Aorta (tissue), 5 donors: ENCODE measurements at regions of chr22 and their contacts with region 1.

Region 1: GRCh38 chr22:30947816-30948454 is 20.6 kb downstream of the MORC2 start:
- DNase-seq: no peak
- ATAC-seq: peak; percentile 83
- H3K4me3 ChIP-seq: no peak overlapping the region
- H3K27ac ChIP-seq: peak overlapping the region; percentile 72 to 74
- H3K4me1 ChIP-seq: peaks cover 5 to 8% of the 10 kb centered on the region in 2 donors
- H3K27me3 ChIP-seq: no peaks in the 10 kb centered on the region

Region 2: DNA sequence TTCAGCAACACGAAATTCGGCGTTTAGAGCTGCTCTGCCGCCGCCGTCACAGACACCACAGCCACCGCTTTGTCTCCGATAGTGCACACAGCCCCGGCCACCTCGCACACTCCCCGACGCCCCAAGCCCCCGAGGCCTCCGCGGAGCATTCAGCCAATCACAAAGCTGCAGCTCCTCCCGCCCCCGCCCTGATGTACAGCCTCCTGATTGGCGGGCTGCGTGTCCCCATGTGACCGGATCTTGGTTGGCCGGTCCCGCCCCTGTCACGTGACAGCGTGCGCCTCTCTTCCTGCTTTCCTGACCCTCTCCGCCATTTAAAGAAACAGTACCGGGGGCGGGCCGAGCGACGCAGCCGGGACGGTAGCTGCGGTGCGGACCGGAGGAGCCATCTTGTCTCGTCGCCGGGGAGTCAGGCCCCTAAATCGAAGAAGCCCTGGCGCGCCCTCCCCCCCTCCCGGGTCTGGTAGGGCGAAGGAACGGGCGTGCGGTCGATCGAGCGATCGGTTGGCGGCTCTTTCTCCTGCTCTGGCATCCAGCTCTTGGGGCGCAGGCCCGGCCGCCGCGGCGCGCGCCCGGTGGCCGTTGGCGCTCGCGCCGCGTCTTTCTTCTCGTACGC is 21.1 kb after region 1 on chr22 and contains the start of gene TUG1:
- intact Hi-C with region 1: loop called in 1 of 2 experiments (anchors 1 kb)
- DNase-seq: peak; percentile 99
- ATAC-seq: peak; percentile 99
- H3K4me3 ChIP-seq: peak within 1 kb of the TSS; percentile 70 to 83
- H3K27ac ChIP-seq: peak within 1 kb of the TSS; percentile 55 to 64
- H3K4me1 ChIP-seq: peaks cover 0 to 4% of the 10 kb centered on the region in 2 donors
- H3K27me3 ChIP-seq: no peaks in the 10 kb centered on the region
- total RNA-seq, gene TUG1: 86.1 to 89.4 TPM

Region 3: GRCh38 chr22:30985561-30986208 is 37.8 kb after region 1 on chr22:
- intact Hi-C with region 1: loop called in 1 of 2 experiments (anchors 5 kb)
- DNase-seq: no peak
- ATAC-seq: no peak
- H3K4me3 ChIP-seq: no peak overlapping the region
- H3K27ac ChIP-seq: no peak overlapping the region
- H3K4me1 ChIP-seq: peaks cover 4 to 5% of the 10 kb centered on the region in 2 donors
- H3K27me3 ChIP-seq: no peaks in the 10 kb centered on the region

Region 4: DNA sequence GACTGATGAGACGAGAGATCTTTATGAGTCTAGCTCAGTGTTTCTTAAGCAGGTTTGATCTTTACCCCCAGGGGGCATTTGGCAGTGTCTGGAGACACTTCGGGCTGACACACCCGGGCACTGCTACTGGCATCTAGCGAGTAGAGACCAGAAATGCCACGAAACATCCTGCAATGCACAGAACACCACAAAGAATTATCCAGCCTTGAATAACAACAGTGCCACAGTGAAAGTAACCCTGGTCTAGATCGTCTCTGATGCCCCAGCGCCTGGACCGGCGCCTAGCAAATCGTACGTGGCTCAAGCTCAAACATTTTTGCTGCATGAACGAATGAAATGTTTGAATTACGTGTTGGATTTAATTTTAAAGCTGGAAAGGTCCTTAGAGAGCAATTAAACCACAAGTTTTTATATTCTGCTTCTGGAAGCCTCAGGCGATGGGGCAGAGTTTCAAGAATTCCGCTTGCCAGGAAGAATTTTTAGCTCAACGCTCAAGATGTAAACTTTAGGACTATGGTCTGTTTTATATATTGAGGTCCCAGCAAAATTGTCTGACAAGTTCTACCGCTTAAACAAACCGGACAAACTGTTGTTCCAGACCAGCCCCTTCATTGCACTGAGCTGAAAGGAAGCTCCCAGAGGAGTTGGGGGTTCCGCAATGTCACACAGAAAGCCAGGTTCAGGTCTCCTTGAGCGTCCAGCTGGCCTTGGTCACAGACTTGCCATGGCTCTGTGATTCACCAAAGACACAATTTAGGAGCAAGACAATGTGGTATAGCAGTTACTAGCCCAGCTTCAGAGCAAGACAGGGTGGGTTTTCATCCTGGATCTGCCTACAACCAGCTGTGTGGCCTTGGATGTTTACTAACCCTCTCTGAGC is 89.0 kb after region 1 on chr22:
- intact Hi-C with region 1: loop called (anchors 5 kb)
- DNase-seq: peak; percentile 74 to 85
- ATAC-seq: peak; percentile 76
- H3K4me3 ChIP-seq: peak overlapping the region in 1 of 2 donors; percentile 9
- H3K27ac ChIP-seq: peak overlapping the region; percentile 31 to 89
- H3K4me1 ChIP-seq: peaks cover 0 to 3% of the 10 kb centered on the region in 2 donors
- H3K27me3 ChIP-seq: no peaks in the 10 kb centered on the region

Region 5: GRCh38 chr22:31044262-31044861 is 96.4 kb after region 1 on chr22:
- intact Hi-C with region 1: loop called (anchors 5 kb)
- DNase-seq: peak; percentile 86 to 93
- ATAC-seq: peak; percentile 83
- H3K4me3 ChIP-seq: no peak overlapping the region
- H3K27ac ChIP-seq: peak overlapping the region; percentile 6 to 66
- H3K4me1 ChIP-seq: no peaks in the 10 kb centered on the region
- H3K27me3 ChIP-seq: no peaks in the 10 kb centered on the region

Region 6: DNA sequence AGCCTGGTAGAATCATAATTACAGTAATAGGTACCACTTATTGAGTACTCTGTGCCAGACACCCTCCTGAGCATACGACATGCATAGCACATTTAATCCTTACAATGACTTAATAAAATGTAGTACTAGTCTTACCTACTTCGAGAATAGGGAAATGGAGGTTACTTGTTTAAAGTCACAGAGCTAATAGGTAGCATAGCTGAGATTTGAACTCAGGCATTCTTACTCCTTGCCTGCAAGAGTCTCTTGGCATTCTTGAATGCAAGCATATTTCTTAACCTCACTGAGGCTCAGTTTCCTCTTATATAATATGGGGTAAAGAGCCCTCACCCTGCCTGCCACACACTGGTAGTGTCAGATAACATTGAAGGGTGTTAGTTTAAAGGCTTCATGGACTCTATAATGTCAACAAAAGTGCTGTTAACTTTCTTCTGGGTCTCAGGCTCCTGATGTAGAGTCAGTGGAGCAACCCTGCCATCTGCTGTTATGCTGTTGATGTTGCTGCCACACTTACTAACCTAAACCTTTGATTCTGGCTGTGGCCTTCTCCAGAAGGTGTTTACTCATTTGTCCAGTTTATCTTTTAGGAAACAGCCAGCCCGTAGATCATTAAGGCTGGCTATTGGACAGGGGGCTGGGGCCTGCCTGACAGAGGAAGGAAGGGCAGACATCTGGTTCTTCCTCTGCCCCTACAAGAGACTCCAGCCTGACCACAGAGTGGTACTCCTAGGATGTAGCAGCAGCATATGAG is 283.1 kb after region 1 on chr22:
- intact Hi-C with region 1: loop called in 1 of 2 experiments (anchors 5 kb)
- DNase-seq: no peak
- ATAC-seq: peak; percentile 78
- H3K4me3 ChIP-seq: no peak overlapping the region
- H3K27ac ChIP-seq: no peak overlapping the region
- H3K4me1 ChIP-seq: no peaks in the 10 kb centered on the region
- H3K27me3 ChIP-seq: no peaks in the 10 kb centered on the region